H1 (cell line): ENCODE measurements at regions of chr1 and their contacts with region 1.

Region 1: GRCh38 chr1:100351095-100351891 is 1.0 kb upstream of the CDC14A start:
- DNase-seq: peak; percentile 90 to 93
- H3K4me3 ChIP-seq: peak overlapping the region; percentile 81 to 97 (median 88)
- H3K27ac ChIP-seq: peak overlapping the region; percentile 96
- H3K4me1 ChIP-seq: peaks cover 0 to 7% (median 3%) of the 10 kb centered on the region in 4 experiments; a peak in 5 of 7 replicates
- H3K27me3 ChIP-seq: no peaks in the 10 kb centered on the region
- CTCF ChIP-seq: peak; percentile 56 to 62 (median 60)
- EP300 ChIP-seq: peak in 1 of 2 experiments; percentile 44; a peak in 1 of 3 replicates
- POLR2A ChIP-seq: peak; percentile 85 to 99
- RAD21 ChIP-seq: peak; percentile 54 to 71

Region 2: DNA sequence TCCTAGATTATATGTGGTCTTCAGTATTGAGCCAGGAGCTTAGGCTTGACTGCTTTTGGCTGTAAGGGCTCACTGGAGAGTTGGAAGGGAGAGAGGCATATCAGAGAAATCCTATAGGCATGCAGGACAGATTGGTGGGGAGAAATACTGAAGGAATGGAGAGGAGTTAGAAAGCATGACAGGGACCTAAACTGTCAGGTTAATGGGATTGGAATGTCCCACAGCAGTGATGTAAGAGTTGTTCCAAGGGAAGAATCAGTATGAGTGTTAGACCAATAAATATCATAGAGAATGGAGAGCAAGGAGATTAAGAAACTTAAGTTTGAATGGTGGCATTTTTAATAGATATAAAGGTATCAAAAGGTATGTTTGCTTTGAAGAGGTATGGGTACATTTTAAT is 341.8 kb before region 1 on chr1:
- CTCF ChIA-PET with region 1: no interaction called
- POLR2A ChIA-PET with region 1: no interaction called
- DNase-seq: no peak
- H3K4me3 ChIP-seq: no peak overlapping the region
- H3K27ac ChIP-seq: no peak overlapping the region
- H3K4me1 ChIP-seq: no peaks in the 10 kb centered on the region; a peak in 1 of 7 replicates
- H3K27me3 ChIP-seq: no peaks in the 10 kb centered on the region
- CTCF ChIP-seq: no peak
- EP300 ChIP-seq: no peak
- POLR2A ChIP-seq: no peak
- RAD21 ChIP-seq: no peak

Region 3: DNA sequence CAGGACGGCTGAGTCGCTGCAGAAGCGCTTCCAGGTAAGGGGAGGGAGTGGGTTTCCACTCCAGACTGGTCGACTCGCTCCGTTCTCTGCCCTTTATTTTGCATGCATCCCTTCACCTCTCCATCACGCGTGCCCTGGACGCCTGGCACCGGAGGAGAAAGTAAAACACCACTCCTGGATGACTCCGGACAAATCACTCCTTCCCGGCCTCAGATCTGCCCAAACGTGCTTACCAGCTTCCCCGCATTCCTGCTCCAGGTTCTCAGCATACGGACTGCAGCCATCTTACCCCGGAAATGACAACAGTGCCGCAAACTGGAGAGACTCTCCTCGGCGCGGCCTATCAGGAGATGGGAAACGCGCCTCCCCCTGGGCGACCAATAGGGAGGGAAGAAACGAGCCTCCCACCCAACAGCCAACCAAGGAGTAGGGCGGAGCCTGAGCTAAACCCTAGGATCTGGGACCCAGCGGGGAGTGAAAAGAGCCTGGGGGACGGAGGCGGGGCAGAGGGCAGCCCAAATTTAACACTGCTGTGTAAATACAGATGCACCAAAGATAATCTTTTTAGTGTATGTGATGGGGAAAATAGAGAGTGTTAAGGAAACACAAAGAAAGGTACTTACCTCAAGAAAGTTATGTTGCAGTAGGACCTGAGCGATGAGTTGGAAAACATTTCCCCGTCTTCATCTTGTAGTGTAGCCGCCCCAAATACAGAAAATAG is 101.6 kb before region 1 on chr1 and contains the start of gene DBT:
- CTCF ChIA-PET with region 1: interaction called, 4 read pairs
- POLR2A ChIA-PET with region 1: interaction called, 23 read pairs
- DNase-seq: peak; percentile 88 to 90
- H3K4me3 ChIP-seq: peak within 1 kb of the TSS; percentile 80 to 96 (median 90)
- H3K27ac ChIP-seq: peak within 1 kb of the TSS; percentile 96
- H3K4me1 ChIP-seq: peaks cover 0 to 5% (median 0%) of the 10 kb centered on the region in 4 experiments; a peak in 2 of 7 replicates
- H3K27me3 ChIP-seq: no peaks in the 10 kb centered on the region
- CTCF ChIP-seq: no peak
- EP300 ChIP-seq: peak in 1 of 2 experiments; percentile 61; a peak in 1 of 3 replicates
- POLR2A ChIP-seq: peak; percentile 97
- RAD21 ChIP-seq: 0 out of 4 replicates have a peak, but pooled peaks of 1 of the 2 experiments have one; percentile 7
- total RNA-seq, gene DBT: 24.6 and 25.4 TPM in 2 replicates

Region 4: GRCh38 chr1:100265931-100266740 is 85.2 kb before region 1 on chr1 and contains the start of gene RTCA:
- CTCF ChIA-PET with region 1: interaction called, 10 read pairs
- POLR2A ChIA-PET with region 1: interaction called, 17 read pairs
- DNase-seq: peak; percentile 87 to 95
- H3K4me3 ChIP-seq: peak within 1 kb of the TSS; percentile 83 to 93 (median 90)
- H3K27ac ChIP-seq: peak within 1 kb of the TSS; percentile 87
- H3K4me1 ChIP-seq: peaks cover 0 to 3% (median under 1%) of the 10 kb centered on the region in 4 experiments; a peak in 3 of 7 replicates
- H3K27me3 ChIP-seq: no peaks in the 10 kb centered on the region
- CTCF ChIP-seq: no peak
- EP300 ChIP-seq: no peak
- POLR2A ChIP-seq: peak; percentile 51 to 90
- RAD21 ChIP-seq: peak in 1 of 2 experiments; percentile 21; a peak in 2 of 4 replicates
- total RNA-seq, gene RTCA: 31.6 and 31.8 TPM in 2 replicates

Region 5: DNA sequence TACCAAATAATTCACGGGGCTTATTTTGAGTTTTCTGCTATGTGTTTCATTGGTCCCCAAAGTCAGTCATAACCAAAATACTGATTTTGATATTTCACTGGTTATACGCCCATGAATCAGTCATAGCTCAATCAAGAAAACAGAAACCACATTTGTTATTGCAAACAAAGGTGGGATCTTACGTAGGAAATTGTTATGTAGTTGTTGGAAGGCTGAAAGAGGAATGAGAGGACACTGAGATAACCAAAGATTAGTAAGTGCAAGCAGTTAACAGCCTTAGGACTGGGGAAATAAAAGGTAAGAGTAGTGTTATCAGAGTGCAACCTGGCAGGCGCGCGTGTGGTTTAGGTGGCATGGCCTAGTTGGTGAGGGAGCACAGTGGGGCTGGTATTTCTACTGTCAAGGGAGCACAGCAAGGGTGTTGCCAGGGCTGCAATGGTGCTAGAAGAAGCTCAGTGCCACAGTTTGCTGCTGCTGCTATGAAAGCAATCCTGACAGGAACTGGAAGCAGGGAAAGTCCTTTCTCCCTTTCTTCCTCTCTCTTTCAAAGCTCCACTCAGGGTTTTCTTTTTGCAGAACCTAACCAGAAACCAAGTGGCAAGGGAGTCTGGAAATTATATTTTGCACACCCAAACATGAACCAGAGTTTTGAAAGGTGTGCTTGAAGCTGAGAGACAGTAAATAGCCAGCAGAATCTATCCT is 51.6 kb before region 1 on chr1:
- CTCF ChIA-PET with region 1: interaction called, 15 read pairs
- POLR2A ChIA-PET with region 1: interaction called, 31 read pairs
- DNase-seq: no peak
- H3K4me3 ChIP-seq: no peak overlapping the region
- H3K27ac ChIP-seq: no peak overlapping the region
- H3K4me1 ChIP-seq: peaks cover 3 to 12% (median 6%) of the 10 kb centered on the region in 4 experiments; a peak in 6 of 7 replicates
- H3K27me3 ChIP-seq: no peaks in the 10 kb centered on the region
- CTCF ChIP-seq: no peak
- EP300 ChIP-seq: no peak
- POLR2A ChIP-seq: no peak
- RAD21 ChIP-seq: no peak

Region 6: GRCh38 chr1:100323419-100324106 is 27.7 kb before region 1 on chr1:
- CTCF ChIA-PET with region 1: interaction called, 5 read pairs
- POLR2A ChIA-PET with region 1: interaction called, 10 read pairs
- DNase-seq: no peak
- H3K4me3 ChIP-seq: no peak overlapping the region
- H3K27ac ChIP-seq: peak overlapping the region; percentile 3; the same call in 1 of the 2 replicates
- H3K4me1 ChIP-seq: peaks cover 0 to 7% (median 3%) of the 10 kb centered on the region in 4 experiments; a peak in 4 of 7 replicates
- H3K27me3 ChIP-seq: no peaks in the 10 kb centered on the region
- CTCF ChIP-seq: no peak
- EP300 ChIP-seq: no peak
- POLR2A ChIP-seq: no peak
- RAD21 ChIP-seq: no peak

Region 7: DNA sequence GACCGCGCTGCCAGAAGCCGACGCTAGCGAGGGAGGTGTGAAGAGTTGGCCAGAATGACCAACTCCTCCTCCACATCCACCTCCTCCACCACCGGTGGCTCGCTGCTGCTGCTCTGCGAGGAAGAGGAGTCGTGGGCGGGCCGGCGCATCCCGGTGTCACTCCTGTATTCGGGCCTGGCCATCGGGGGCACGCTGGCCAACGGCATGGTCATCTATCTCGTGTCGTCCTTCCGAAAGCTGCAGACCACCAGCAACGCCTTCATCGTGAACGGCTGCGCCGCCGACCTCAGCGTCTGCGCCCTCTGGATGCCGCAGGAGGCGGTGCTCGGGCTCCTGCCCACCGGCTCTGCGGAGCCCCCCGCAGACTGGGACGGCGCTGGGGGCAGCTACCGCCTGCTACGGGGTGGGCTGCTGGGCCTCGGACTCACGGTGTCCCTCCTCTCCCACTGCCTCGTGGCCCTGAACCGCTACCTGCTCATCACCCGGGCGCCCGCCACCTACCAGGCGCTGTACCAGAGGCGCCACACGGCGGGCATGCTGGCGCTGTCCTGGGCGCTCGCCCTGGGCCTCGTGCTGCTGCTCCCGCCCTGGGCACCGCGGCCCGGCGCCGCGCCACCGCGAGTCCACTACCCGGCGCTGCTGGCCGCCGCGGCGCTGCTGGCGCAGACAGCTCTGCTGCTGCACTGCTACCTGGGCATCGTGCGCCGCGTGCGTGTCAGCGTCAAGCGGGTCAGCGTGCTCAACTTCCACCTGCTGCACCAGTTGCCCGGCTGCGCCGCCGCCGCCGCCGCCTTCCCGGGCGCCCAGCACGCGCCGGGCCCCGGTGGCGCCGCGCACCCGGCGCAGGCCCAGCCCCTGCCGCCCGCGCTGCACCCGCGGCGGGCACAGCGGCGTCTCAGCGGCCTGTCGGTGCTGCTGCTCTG is 187.9 kb after region 1 on chr1:
- CTCF ChIA-PET with region 1: no interaction called
- POLR2A ChIA-PET with region 1: no interaction called
- DNase-seq: peak in 1 of 2 experiments; percentile 71
- H3K4me3 ChIP-seq: peak overlapping the region; percentile 30 to 57 (median 38)
- H3K27ac ChIP-seq: no peak overlapping the region
- H3K4me1 ChIP-seq: peaks cover 0 to 16% (median 5%) of the 10 kb centered on the region in 4 experiments; a peak in 6 of 7 replicates
- H3K27me3 ChIP-seq: peaks cover 34 to 49% (median 40%) of the 10 kb centered on the region in 4 experiments
- CTCF ChIP-seq: peak in 1 of 3 experiments; percentile 18; a peak in 1 of 4 replicates
- EP300 ChIP-seq: no peak
- POLR2A ChIP-seq: no peak
- RAD21 ChIP-seq: peak; percentile 6 to 10; a peak in 1 of 4 replicates

Region 8: GRCh38 chr1:100613817-100614559 is 262.7 kb after region 1 on chr1:
- CTCF ChIA-PET with region 1: no interaction called
- POLR2A ChIA-PET with region 1: no interaction called
- DNase-seq: no peak
- H3K4me3 ChIP-seq: no peak overlapping the region
- H3K27ac ChIP-seq: no peak overlapping the region
- H3K4me1 ChIP-seq: no peaks in the 10 kb centered on the region
- H3K27me3 ChIP-seq: no peaks in the 10 kb centered on the region
- CTCF ChIP-seq: no peak
- EP300 ChIP-seq: no peak
- POLR2A ChIP-seq: no peak
- RAD21 ChIP-seq: no peak

Region 9: DNA sequence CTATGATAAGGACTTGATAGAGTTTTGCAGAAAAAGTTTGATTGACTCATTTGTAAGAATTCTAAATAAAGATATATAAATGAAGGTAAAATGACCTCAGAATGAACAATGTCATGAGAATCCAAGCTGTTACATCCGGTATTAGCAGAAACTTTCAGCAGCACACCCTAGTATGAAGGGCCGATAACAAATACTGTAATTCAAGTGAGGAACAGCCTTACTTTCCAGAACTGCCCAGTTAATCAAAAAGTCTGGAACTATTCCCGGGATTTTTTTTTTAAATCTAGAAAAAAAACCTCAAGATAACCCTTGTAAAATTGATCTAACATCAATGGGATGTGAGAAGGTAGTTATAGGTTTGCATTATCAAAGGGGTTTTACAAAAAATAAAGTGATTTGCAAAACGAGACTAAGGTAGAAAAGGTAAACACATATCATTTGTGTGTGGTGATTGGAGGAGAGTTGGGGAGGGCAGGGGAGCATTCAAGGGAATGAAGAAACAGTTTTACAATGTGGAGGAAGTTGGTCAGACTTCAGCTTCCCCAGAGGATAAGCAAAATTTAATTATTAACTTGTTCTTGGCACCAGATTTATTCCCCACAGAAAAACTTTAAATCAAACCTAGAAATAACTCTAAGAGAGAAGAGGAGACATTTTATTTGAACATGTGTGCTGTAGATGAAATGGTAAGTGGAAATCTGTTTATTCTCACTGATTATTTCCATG is 292.3 kb after region 1 on chr1:
- CTCF ChIA-PET with region 1: no interaction called
- POLR2A ChIA-PET with region 1: no interaction called
- DNase-seq: no peak
- H3K4me3 ChIP-seq: no peak overlapping the region
- H3K27ac ChIP-seq: no peak overlapping the region
- H3K4me1 ChIP-seq: no peaks in the 10 kb centered on the region
- H3K27me3 ChIP-seq: no peaks in the 10 kb centered on the region
- CTCF ChIP-seq: no peak
- EP300 ChIP-seq: no peak
- POLR2A ChIP-seq: no peak
- RAD21 ChIP-seq: no peak